ENCODE measurements at regions of chr4 and their contacts with region 1.

Region 1: GRCh38 chr4:113455061-113455460 is 306.5 kb downstream of the CAMK2D start:
- DNase-seq: no peak
- CTCF ChIP-seq: no peak

Region 2: DNA sequence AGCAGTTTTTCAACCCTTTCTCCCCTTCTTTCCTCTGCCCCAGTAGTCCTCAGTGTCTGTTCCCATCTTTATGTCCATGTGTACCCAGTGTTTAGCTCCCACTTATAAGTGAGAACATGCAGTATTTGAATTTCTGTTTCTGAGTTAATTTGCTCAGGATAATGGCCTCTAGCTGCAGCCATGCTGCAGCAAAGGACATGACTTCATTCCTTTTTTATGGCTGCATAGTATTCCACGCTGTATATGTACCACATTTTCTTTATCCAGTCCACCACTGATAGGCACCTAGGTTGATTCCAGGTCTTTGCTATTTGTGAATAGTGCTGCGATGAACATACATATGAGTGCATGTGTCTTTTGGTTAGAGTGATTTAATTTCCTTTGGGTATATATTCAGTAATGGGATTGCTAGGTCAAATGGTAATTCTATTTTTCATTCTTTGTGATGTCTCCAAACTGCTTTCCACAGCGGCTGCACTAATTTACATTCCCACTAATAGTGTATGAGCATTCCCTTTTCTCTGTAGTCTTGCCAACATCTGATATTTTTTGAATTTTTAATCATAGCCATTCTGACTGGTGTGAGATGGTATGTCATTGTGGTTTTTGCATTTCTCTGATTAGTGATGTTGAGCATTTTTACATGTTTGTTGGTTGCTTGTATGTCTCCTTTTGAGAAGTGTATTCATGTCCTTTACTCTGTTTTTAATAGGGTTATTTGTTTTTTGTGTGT is 460.2 kb before region 1 on chr4:
- CTCF ChIA-PET with region 1: no interaction called
- POLR2A ChIA-PET with region 1: no interaction called
- DNase-seq: no peak
- CTCF ChIP-seq: no peak

Region 3: DNA sequence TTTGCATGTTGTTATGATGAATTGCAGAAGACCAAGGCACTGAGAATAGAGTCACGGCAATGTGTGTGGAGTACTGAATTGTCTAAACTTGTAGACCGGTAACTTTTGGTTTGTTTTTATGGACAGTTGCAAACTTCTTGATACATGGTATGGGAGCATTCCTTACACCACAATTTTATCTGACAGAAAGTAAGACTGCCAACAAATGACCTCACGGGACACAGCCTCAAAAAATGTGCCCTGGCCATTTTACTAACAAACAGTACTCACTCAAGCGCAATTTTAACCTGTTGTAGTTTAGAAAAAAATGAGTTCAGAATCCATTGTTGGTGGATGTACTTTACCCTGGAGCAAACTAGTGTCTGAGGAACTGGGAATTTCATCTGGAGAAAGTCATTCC is 14.7 kb before region 1 on chr4:
- CTCF ChIA-PET with region 1: no interaction called
- POLR2A ChIA-PET with region 1: no interaction called
- DNase-seq: no peak
- CTCF ChIP-seq: no peak

Region 4: GRCh38 chr4:113468165-113469022 is 13.3 kb after region 1 on chr4:
- CTCF ChIA-PET with region 1: interaction called, 12 read pairs
- POLR2A ChIA-PET with region 1: interaction called, 4 read pairs
- DNase-seq: no peak
- CTCF ChIP-seq: no peak

Measured in GM10248 (cell line).